Endothelial cell of umbilical vein (primary cell): ENCODE measurements at regions of chr7 and their contacts with region 1.

Region 1: GRCh38 chr7:33932832-33933468 is 27.6 kb downstream of the BMPER start:
- DNase-seq: peak; percentile 85
- H3K4me3 ChIP-seq: peak overlapping the region in 2 of 3 experiments; percentile 13 to 17
- H3K27ac ChIP-seq: no peak overlapping the region
- H3K4me1 ChIP-seq: no peaks in the 10 kb centered on the region
- H3K27me3 ChIP-seq: peaks cover 0 to 1% of the 10 kb centered on the region in 2 experiments
- CTCF ChIP-seq: peak; percentile 95
- POLR2A ChIP-seq: no peak

Region 2: DNA sequence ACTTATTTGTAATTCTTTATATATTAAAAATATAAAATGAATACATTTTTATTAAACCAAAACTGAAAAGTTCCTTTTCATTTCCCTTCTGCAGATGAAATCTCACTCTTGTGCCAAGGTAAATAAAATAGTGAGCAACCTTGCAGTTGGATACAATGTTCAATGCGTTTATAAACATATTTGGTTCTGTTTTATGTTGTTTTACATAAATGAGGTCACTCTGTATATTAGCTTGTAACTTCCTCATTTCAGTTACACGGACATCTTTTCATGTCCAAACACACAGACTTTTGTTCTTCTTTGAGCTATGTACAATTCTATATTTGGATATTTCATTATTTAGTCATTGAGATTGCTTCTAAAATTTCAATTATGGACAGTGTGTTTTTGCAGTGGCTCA is 695.9 kb before region 1 on chr7:
- CTCF ChIA-PET with region 1: interaction called, 229 read pairs
- POLR2A ChIA-PET with region 1: no interaction called
- dilution Hi-C with region 1: no loop called
- intact Hi-C with region 1: no loop called
- DNase-seq: peak; percentile 31
- H3K4me3 ChIP-seq: no peak overlapping the region
- H3K27ac ChIP-seq: no peak overlapping the region
- H3K4me1 ChIP-seq: peaks cover 6% of the 10 kb centered on the region
- H3K27me3 ChIP-seq: no peaks in the 10 kb centered on the region
- CTCF ChIP-seq: no peak
- POLR2A ChIP-seq: no peak

Region 3: GRCh38 chr7:33388332-33388731 is 544.6 kb before region 1 on chr7:
- CTCF ChIA-PET with region 1: no interaction called
- POLR2A ChIA-PET with region 1: no interaction called
- dilution Hi-C with region 1: no loop called
- intact Hi-C with region 1: no loop called
- DNase-seq: no peak
- H3K4me3 ChIP-seq: no peak overlapping the region
- H3K27ac ChIP-seq: no peak overlapping the region
- H3K4me1 ChIP-seq: no peaks in the 10 kb centered on the region
- H3K27me3 ChIP-seq: no peaks in the 10 kb centered on the region
- CTCF ChIP-seq: no peak
- POLR2A ChIP-seq: no peak

Region 4: GRCh38 chr7:33423646-33424020 is 509.3 kb before region 1 on chr7:
- CTCF ChIA-PET with region 1: interaction called, 61 read pairs
- POLR2A ChIA-PET with region 1: no interaction called
- dilution Hi-C with region 1: no loop called
- intact Hi-C with region 1: loop called (anchors 2 kb)
- DNase-seq: peak; percentile 15
- H3K4me3 ChIP-seq: no peak overlapping the region
- H3K27ac ChIP-seq: no peak overlapping the region
- H3K4me1 ChIP-seq: no peaks in the 10 kb centered on the region
- H3K27me3 ChIP-seq: no peaks in the 10 kb centered on the region
- CTCF ChIP-seq: peak; percentile 16 to 27
- POLR2A ChIP-seq: no peak

Region 5: DNA sequence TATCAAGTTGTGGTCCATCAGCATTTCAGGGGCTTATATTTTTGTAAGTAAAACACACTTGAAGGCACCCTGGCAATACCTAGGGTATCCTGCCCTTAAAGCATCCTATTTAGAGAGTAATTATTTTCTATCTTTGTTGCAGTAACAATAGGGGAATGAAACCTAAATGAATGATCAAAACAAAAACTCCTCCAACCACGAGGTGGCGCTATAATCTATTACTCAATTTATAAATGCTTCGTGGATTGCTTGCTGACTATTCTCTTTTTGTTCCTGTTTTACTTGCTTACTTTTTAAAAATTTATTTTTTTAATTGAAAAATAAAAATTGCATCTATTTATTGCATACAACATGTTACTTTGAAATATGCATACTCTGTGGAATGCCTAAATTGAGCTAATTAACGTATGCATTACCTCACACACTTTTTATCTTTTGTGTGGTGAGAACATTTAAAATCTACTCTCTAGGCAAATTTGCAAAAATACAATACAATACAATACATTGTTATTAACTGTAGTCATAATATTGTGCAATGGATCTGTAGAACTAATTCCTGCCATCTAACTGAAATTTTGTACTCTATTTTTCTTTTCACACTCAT is 175.3 kb before region 1 on chr7:
- CTCF ChIA-PET with region 1: interaction called, 114 read pairs
- POLR2A ChIA-PET with region 1: no interaction called
- dilution Hi-C with region 1: no loop called
- intact Hi-C with region 1: loop called (anchors 1 kb)
- DNase-seq: peak; percentile 58
- H3K4me3 ChIP-seq: no peak overlapping the region
- H3K27ac ChIP-seq: no peak overlapping the region
- H3K4me1 ChIP-seq: peaks cover 8% of the 10 kb centered on the region
- H3K27me3 ChIP-seq: no peaks in the 10 kb centered on the region
- CTCF ChIP-seq: peak; percentile 31 to 35
- POLR2A ChIP-seq: no peak

Region 6: DNA sequence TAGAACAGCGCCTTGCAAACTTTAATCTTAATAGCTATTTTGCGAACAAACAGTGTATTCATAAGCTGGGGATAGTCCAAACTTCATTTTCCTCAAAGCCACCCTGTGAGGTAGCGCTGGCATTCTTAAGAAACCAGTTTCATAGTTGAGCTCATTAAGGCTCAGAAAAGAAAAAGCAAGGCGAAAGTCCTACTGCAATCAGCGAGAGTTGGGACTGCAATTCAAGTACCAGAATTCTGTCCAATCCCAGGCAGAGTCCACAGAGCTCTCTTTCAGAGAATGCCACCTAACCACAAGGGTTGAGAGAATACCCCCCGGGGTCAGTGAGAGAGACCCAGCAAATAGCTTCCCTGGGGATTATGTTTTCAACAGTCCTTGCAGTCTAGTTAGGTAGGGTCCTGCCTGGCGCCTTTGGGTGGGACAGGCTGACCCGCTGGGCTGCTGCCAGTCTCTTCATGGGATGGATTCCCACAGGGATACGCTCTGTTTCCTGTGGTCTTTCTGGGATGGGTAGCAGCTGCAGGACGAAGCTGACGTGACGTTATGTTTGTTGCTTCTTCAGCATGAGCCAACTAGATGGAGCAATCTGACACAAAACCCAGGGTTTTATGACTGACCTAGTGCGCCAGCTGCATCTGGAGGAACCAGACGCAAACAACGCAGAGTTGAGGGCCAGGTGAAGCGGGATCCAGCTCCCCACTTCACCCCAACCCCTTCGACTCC is 11.6 kb before region 1 on chr7:
- CTCF ChIA-PET with region 1: interaction called, 40 read pairs
- POLR2A ChIA-PET with region 1: no interaction called
- dilution Hi-C with region 1: no loop called
- intact Hi-C with region 1: no loop called
- DNase-seq: no peak
- H3K4me3 ChIP-seq: no peak overlapping the region
- H3K27ac ChIP-seq: no peak overlapping the region
- H3K4me1 ChIP-seq: no peaks in the 10 kb centered on the region
- H3K27me3 ChIP-seq: peaks cover 3% of the 10 kb centered on the region in 2 experiments
- CTCF ChIP-seq: no peak
- POLR2A ChIP-seq: no peak

Region 7: DNA sequence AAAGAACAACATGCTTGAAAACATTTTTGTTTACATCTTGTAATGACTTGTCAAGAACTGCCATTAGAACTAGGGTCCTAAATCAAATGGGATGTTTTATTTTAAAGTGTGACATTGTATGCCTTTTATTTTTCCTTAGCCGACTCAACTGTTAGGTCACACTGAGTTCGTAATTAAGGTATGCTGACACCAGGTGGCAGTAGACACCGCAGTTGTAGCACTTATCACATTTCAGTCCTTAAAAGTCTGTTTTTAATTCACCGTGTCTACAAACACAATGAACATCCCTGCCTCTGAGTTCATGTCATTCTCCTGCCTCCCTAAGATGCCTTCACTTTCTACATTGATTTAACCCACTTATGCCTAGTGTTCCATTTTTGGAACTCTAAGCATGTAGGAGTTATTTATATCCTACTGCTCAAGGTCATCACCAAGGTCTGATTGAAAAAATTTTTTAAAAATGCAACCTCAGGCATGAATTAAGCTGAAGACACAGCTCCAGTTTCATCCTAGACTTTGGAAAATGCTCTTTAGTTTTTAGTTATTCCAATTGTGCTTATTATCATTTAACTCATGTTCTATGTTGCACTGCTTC is 158.5 kb after region 1 on chr7:
- CTCF ChIA-PET with region 1: interaction called, 19 read pairs
- POLR2A ChIA-PET with region 1: no interaction called
- dilution Hi-C with region 1: no loop called
- intact Hi-C with region 1: no loop called
- DNase-seq: peak; percentile 58
- H3K4me3 ChIP-seq: no peak overlapping the region
- H3K27ac ChIP-seq: no peak overlapping the region
- H3K4me1 ChIP-seq: no peaks in the 10 kb centered on the region
- H3K27me3 ChIP-seq: no peaks in the 10 kb centered on the region
- CTCF ChIP-seq: peak; percentile 44 to 52
- POLR2A ChIP-seq: no peak